CD4-positive, alpha-beta T cell (primary cell): ENCODE measurements at regions of chr14 and their contacts with region 1.

Region 1: GRCh38 chr14:100192672-100193416 is 33.4 kb upstream of the DEGS2 start:
- DNase-seq: peak; percentile 99 to 100 (median 100)
- ATAC-seq: peak; percentile 99
- H3K4me3 ChIP-seq: peak overlapping the region; percentile 60
- H3K4me3 Mint-ChIP-seq: peak overlapping the region; percentile 54
- H3K27ac ChIP-seq: peak overlapping the region; percentile 33 to 84
- H3K27ac Mint-ChIP-seq: peak overlapping the region; percentile 86
- H3K4me1 ChIP-seq: peaks cover 21% of the 10 kb centered on the region
- H3K4me1 Mint-ChIP-seq: peaks cover 9% of the 10 kb centered on the region
- H3K27me3 ChIP-seq: no peaks in the 10 kb centered on the region
- H3K27me3 Mint-ChIP-seq: no peaks in the 10 kb centered on the region
- CTCF ChIP-seq: peak; percentile 93

Region 2: GRCh38 chr14:100056964-100057795 is 135.7 kb before region 1 on chr14:
- CTCF ChIA-PET with region 1: interaction called, 7 read pairs
- POLR2A ChIA-PET with region 1: interaction called, 3 read pairs
- intact Hi-C with region 1: loop called (anchors 1 to 2 kb)
- DNase-seq: peak in 4 of 14 experiments; percentile 48 to 85 (median 78)
- ATAC-seq: peak; percentile 80
- H3K4me3 ChIP-seq: no peak overlapping the region
- H3K4me3 Mint-ChIP-seq: peak overlapping the region; percentile 8
- H3K27ac ChIP-seq: peak overlapping the region in 1 of 2 donors; percentile 39
- H3K27ac Mint-ChIP-seq: peak overlapping the region; percentile 78
- H3K4me1 ChIP-seq: peaks cover 48% of the 10 kb centered on the region
- H3K4me1 Mint-ChIP-seq: peaks cover 51% of the 10 kb centered on the region
- H3K27me3 ChIP-seq: no peaks in the 10 kb centered on the region
- H3K27me3 Mint-ChIP-seq: no peaks in the 10 kb centered on the region
- CTCF ChIP-seq: peak; percentile 81

Region 3: DNA sequence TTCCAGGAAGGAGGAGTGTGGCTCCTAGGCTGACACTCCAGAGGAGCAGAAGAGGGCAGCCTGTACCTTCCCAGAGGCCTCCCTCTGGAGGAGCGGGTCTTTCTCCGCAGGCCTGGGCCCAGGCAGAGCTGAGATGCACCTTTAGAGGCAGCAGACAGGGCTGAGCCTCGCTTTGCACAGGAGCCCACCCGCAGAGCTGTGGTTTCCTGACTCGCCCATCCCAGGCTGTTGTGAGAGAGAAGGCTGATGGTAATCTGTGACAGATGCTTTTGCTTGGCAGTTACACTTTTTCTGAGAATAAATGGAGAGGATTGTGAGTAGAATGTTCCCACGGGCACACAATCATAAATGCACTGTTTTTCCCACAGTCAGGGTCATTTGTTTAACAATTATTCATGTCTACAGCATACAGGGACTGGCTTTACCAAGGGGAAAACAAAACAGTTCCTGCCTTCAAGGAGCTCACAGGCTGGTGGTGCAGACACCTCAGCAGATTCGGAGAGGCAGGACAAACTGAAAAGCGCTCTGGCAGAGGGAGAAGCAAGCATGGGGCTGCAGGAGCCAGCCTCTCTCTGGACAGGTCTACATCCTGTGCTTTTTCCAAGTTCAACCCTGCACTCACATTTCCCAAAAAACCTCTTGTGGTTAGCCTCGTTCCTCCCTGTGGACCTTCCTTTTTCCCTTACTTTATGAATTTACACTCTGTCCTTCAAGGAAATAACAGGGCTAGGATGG is 113.7 kb before region 1 on chr14:
- CTCF ChIA-PET with region 1: interaction called, 19 read pairs
- POLR2A ChIA-PET with region 1: interaction called, 10 read pairs
- intact Hi-C with region 1: loop called (anchors 5 kb)
- DNase-seq: peak; percentile 73 to 94 (median 83)
- ATAC-seq: peak; percentile 69
- H3K4me3 ChIP-seq: peak overlapping the region; percentile 29
- H3K4me3 Mint-ChIP-seq: peak overlapping the region; percentile 88
- H3K27ac ChIP-seq: peak overlapping the region; percentile 53 to 96
- H3K27ac Mint-ChIP-seq: peak overlapping the region; percentile 98
- H3K4me1 ChIP-seq: peaks cover 95% of the 10 kb centered on the region
- H3K4me1 Mint-ChIP-seq: peaks cover 98% of the 10 kb centered on the region
- H3K27me3 ChIP-seq: no peaks in the 10 kb centered on the region
- H3K27me3 Mint-ChIP-seq: no peaks in the 10 kb centered on the region
- CTCF ChIP-seq: peak; percentile 28

Region 4: DNA sequence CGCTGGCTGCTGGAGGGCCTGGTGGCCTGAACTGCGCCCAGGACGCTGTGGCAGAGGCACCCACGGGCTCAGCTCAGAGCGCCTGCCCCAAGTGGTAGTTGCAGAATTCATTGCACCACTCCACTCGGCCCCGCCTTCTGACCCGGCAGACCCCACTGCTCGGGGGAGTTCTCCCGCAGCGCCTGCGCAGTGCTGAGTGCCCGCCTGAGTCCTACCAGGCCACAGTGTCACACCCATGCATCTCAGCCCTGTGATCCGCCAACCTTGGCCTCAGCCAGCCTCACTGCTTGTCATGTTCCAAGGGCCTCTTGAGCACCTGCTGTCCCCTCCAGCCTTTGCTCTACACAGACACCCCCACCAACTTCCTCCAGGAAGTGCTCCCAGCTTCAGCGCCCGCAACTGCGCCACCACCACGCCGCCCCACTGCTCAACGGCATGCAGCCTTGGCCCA is 45.6 kb before region 1 on chr14:
- CTCF ChIA-PET with region 1: interaction called, 11 read pairs
- POLR2A ChIA-PET with region 1: interaction called, 3 read pairs
- intact Hi-C with region 1: loop called in 1 of 2 experiments (anchors 2 kb)
- DNase-seq: peak; percentile 33 to 84 (median 60)
- ATAC-seq: peak; percentile 62
- H3K4me3 ChIP-seq: peak overlapping the region; percentile 20
- H3K4me3 Mint-ChIP-seq: peak overlapping the region; percentile 60
- H3K27ac ChIP-seq: peak overlapping the region in 1 of 2 donors; percentile 21
- H3K27ac Mint-ChIP-seq: peak overlapping the region; percentile 85
- H3K4me1 ChIP-seq: peaks cover 32% of the 10 kb centered on the region
- H3K4me1 Mint-ChIP-seq: peaks cover 25% of the 10 kb centered on the region
- H3K27me3 ChIP-seq: no peaks in the 10 kb centered on the region
- H3K27me3 Mint-ChIP-seq: no peaks in the 10 kb centered on the region
- CTCF ChIP-seq: no peak

Region 5: GRCh38 chr14:100213956-100214774 is 21.3 kb after region 1 on chr14:
- CTCF ChIA-PET with region 1: interaction called, 22 read pairs
- POLR2A ChIA-PET with region 1: interaction called, 15 read pairs
- intact Hi-C with region 1: loop called (anchors 1 to 2 kb)
- DNase-seq: peak; percentile 83 to 98 (median 92)
- ATAC-seq: peak; percentile 96
- H3K4me3 ChIP-seq: peak overlapping the region; percentile 66
- H3K4me3 Mint-ChIP-seq: peak overlapping the region; percentile 89
- H3K27ac ChIP-seq: peak overlapping the region; percentile 79 to 89
- H3K27ac Mint-ChIP-seq: peak overlapping the region; percentile 91
- H3K4me1 ChIP-seq: peaks cover 32% of the 10 kb centered on the region
- H3K4me1 Mint-ChIP-seq: peaks cover 32% of the 10 kb centered on the region
- H3K27me3 ChIP-seq: no peaks in the 10 kb centered on the region
- H3K27me3 Mint-ChIP-seq: no peaks in the 10 kb centered on the region
- CTCF ChIP-seq: no peak

Region 6: GRCh38 chr14:100239840-100240724 is 47.2 kb after region 1 on chr14:
- CTCF ChIA-PET with region 1: interaction called, 10 read pairs
- POLR2A ChIA-PET with region 1: interaction called, 21 read pairs
- intact Hi-C with region 1: loop called (anchors 1 to 5 kb)
- DNase-seq: peak; percentile 65 to 95 (median 84)
- ATAC-seq: peak; percentile 47
- H3K4me3 ChIP-seq: peak overlapping the region; percentile 78
- H3K4me3 Mint-ChIP-seq: peak overlapping the region; percentile 97
- H3K27ac ChIP-seq: peak overlapping the region; percentile 82 to 86
- H3K27ac Mint-ChIP-seq: peak overlapping the region; percentile 98
- H3K4me1 ChIP-seq: peaks cover 54% of the 10 kb centered on the region
- H3K4me1 Mint-ChIP-seq: peaks cover 63% of the 10 kb centered on the region
- H3K27me3 ChIP-seq: no peaks in the 10 kb centered on the region
- H3K27me3 Mint-ChIP-seq: no peaks in the 10 kb centered on the region
- CTCF ChIP-seq: peak; percentile 30